Breast epithelium (tissue), 4 donors: ENCODE measurements at regions of chr3 and their contacts with region 1.

Region 1: DNA sequence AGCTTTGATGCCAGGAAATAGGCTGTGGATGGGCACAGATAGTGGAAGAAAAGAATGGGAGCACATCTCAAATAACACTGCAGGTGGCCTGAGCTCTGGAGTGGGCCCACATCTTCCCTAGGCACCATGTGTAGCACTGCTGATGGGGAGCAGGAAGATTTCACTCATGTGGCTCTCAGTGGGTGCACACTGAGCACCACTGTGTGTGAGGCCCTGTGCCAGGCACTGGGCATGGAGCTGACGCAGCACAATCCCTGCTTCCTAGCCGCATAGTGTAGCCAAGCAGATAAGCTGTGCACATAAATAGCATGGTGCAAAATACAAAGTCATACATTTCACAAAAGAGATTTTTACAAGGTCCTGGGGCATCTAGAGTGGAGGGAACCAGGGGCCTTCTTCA is 101.6 kb downstream of the MOBP start:
- DNase-seq: no peak
- H3K4me3 ChIP-seq: no peak overlapping the region
- H3K27ac ChIP-seq: no peak overlapping the region
- H3K4me1 ChIP-seq: no peaks in the 10 kb centered on the region
- H3K27me3 ChIP-seq: no peaks in the 10 kb centered on the region
- CTCF ChIP-seq: no peak
- POLR2A ChIP-seq: no peak

Region 2: DNA sequence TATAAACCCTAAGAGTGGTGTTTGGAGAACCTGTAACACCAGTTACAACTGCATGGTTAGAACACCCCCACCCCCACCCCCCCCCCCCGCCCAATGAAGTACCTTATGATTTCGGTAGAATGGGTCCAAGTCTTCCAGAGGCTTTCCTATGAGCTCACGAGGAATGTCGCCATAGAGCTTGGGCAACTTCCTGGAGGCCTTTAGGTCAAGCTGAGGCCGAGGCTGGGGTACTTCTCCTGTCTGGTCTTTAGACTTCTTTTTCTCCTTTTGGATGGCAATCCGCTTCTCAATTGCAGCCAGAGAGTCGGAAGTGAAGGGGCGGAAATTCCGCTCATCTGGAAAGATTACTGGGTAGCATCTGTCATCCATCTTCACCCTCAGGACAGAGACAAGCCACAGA is 619.1 kb before region 1 on chr3:
- intact Hi-C with region 1: loop called (anchors 5 kb)
- DNase-seq: no peak
- H3K4me3 ChIP-seq: no peak overlapping the region
- H3K27ac ChIP-seq: no peak overlapping the region
- H3K4me1 ChIP-seq: no peaks in the 10 kb centered on the region
- H3K27me3 ChIP-seq: no peaks in the 10 kb centered on the region
- CTCF ChIP-seq: no peak
- POLR2A ChIP-seq: no peak